T-cell (primary cell): ENCODE measurements at regions of chr5 and their contacts with region 1.

Region 1: GRCh38 chr5:170302653-170303501 is 5.3 kb upstream of the LCP2 start:
- DNase-seq: peak; percentile 43 to 96 (median 69)
- ATAC-seq: peak; percentile 91 to 98 (median 96)
- H3K4me3 ChIP-seq: peak overlapping the region; percentile 48 to 73
- H3K4me3 Mint-ChIP-seq: peak overlapping the region; percentile 78 to 99 (median 82)
- H3K27ac ChIP-seq: peak overlapping the region; percentile 95
- H3K27ac Mint-ChIP-seq: peak overlapping the region; percentile 98 to 99
- H3K4me1 ChIP-seq: peaks cover 62 to 69% of the 10 kb centered on the region in 2 experiments
- H3K4me1 Mint-ChIP-seq: peaks cover 79 to 90% (median 88%) of the 10 kb centered on the region in 3 donors
- H3K27me3 ChIP-seq: no peaks in the 10 kb centered on the region
- H3K27me3 Mint-ChIP-seq: no peaks in the 10 kb centered on the region

Region 2: DNA sequence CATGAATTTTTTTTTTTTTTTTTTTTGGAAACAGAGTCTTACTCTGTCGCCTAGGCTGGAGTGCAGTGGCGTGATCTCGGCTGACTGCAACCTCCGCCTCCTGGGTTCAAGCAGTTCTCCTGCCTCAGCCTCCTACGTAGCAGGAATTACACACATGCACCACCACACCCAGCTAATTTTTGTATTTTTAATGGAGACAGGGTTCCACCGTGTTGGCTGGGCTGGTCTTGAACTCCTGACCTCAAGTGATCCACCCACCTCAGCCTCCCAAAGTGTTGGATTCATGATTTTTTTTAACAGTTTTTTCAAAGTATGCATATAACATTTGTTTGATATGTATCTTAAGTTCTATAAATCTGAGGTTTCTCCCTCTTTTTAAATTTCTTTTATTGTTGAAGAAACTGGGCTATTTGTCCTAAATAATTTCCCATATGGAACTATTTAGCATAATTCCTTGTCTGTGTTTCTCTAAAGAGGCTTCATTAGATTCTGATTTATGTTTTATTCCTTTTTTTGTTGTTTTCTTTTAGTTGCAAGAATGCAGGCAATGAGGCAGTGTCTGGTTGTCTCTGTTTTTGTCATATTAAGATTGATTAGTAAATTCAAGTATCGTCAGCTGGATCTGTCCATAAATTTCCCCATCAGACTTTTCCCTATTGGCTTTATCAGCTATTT is 1800.2 kb before region 1 on chr5:
- CTCF ChIA-PET with region 1: no interaction called
- POLR2A ChIA-PET with region 1: no interaction called
- DNase-seq: no peak
- ATAC-seq: no peak
- H3K4me3 ChIP-seq: no peak overlapping the region
- H3K4me3 Mint-ChIP-seq: no peak overlapping the region
- H3K27ac ChIP-seq: no peak overlapping the region
- H3K27ac Mint-ChIP-seq: no peak overlapping the region
- H3K4me1 ChIP-seq: no peaks in the 10 kb centered on the region
- H3K4me1 Mint-ChIP-seq: no peaks in the 10 kb centered on the region
- H3K27me3 ChIP-seq: no peaks in the 10 kb centered on the region
- H3K27me3 Mint-ChIP-seq: no peaks in the 10 kb centered on the region

Region 3: DNA sequence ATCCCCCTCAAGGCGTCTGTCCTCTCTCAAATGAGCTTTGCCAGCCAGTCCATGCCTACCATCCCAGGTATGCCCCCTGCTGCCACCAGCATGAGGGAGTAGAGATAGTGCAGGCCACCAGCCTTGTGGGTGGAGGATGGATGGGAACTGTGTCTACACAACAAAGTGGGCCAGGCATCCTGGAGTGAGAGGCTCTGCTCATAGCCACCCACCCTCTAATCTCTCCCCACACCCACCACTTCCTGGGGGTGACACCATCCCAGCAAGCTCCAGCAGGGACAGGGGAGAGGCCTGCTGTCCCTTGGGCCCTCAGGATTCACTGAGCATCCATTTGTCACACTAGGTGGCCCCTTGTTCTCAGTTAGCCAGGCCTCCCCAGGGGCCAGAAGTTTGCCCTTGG is 222.7 kb before region 1 on chr5:
- CTCF ChIA-PET with region 1: no interaction called
- POLR2A ChIA-PET with region 1: no interaction called
- DNase-seq: no peak
- ATAC-seq: no peak
- H3K4me3 ChIP-seq: no peak overlapping the region
- H3K4me3 Mint-ChIP-seq: no peak overlapping the region
- H3K27ac ChIP-seq: no peak overlapping the region
- H3K27ac Mint-ChIP-seq: no peak overlapping the region
- H3K4me1 ChIP-seq: no peaks in the 10 kb centered on the region
- H3K4me1 Mint-ChIP-seq: no peaks in the 10 kb centered on the region
- H3K27me3 ChIP-seq: no peaks in the 10 kb centered on the region
- H3K27me3 Mint-ChIP-seq: no peaks in the 10 kb centered on the region

Region 4: GRCh38 chr5:170287532-170287931 is 15.3 kb before region 1 on chr5:
- CTCF ChIA-PET with region 1: interaction called, 4 read pairs
- POLR2A ChIA-PET with region 1: interaction called, 8 to 14 read pairs
- DNase-seq: no peak
- ATAC-seq: peak in 2 of 4 experiments; percentile 18 to 22
- H3K4me3 ChIP-seq: no peak overlapping the region
- H3K4me3 Mint-ChIP-seq: peak overlapping the region; percentile 32 to 99 (median 52)
- H3K27ac ChIP-seq: peak overlapping the region; percentile 88
- H3K27ac Mint-ChIP-seq: peak overlapping the region; percentile 95 to 99
- H3K4me1 ChIP-seq: peaks cover 87 to 93% of the 10 kb centered on the region in 2 experiments
- H3K4me1 Mint-ChIP-seq: peaks cover 100% of the 10 kb centered on the region in 3 donors
- H3K27me3 ChIP-seq: no peaks in the 10 kb centered on the region
- H3K27me3 Mint-ChIP-seq: no peaks in the 10 kb centered on the region

Region 5: DNA sequence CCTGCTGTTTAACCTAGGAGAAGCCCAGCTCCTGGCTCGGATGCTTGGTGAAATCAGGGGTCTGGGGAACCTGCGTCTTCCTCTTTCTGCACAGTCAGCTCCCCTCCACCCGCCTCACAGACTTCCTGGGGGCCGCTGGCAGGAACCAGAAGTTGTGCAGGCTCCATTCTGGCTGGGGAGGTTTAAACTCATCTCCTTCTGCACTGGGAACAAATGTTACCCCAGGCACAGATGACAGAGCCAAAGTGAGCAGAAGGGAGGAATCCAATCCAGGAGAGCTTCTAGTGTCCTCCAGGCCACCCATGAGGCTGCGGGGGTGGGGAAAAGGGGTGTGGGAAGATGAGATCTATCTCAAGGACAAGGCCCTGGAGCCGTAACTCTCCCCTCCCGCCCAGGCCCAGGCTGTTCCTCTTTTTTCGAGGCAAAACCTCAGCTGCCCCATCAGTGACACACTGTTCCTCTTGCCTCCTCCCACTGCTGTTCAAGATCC is 55.1 kb after region 1 on chr5:
- CTCF ChIA-PET with region 1: no interaction called
- POLR2A ChIA-PET with region 1: interaction called in 1 of 2 experiments, 13 read pairs
- DNase-seq: peak in 7 of 35 experiments; percentile 5 to 43 (median 8)
- ATAC-seq: no peak
- H3K4me3 ChIP-seq: no peak overlapping the region
- H3K4me3 Mint-ChIP-seq: no peak overlapping the region
- H3K27ac ChIP-seq: no peak overlapping the region
- H3K27ac Mint-ChIP-seq: no peak overlapping the region
- H3K4me1 ChIP-seq: peaks cover 0 to 5% of the 10 kb centered on the region in 2 experiments
- H3K4me1 Mint-ChIP-seq: peaks cover 2 to 3% (median 3%) of the 10 kb centered on the region in 3 donors
- H3K27me3 ChIP-seq: peaks cover 0 to 28% of the 10 kb centered on the region in 2 experiments
- H3K27me3 Mint-ChIP-seq: peaks cover 8 to 21% of the 10 kb centered on the region in 2 donors